ENCODE measurements at regions of chr10 and their contacts with region 1.

Region 1: GRCh38 chr10:119199231-119199992 is 8.0 kb upstream of the GRK5 start:
- DNase-seq: peak; percentile 58
- ATAC-seq: peak; percentile 79
- H3K4me3 Mint-ChIP-seq: no peak overlapping the region
- H3K27ac Mint-ChIP-seq: no peak overlapping the region
- H3K4me1 Mint-ChIP-seq: peaks cover 13% of the 10 kb centered on the region
- H3K27me3 Mint-ChIP-seq: no peaks in the 10 kb centered on the region
- CTCF ChIP-seq: peak; percentile 48

Region 2: GRCh38 chr10:119178372-119179119 is 20.9 kb before region 1 on chr10 and contains the start of gene PRDX3:
- CTCF ChIA-PET with region 1: interaction called, 13 read pairs
- POLR2A ChIA-PET with region 1: interaction called, 4 read pairs
- intact Hi-C with region 1: no loop called
- DNase-seq: peak; percentile 97
- ATAC-seq: peak; percentile 98
- H3K4me3 Mint-ChIP-seq: peak within 1 kb of the TSS; percentile 87
- H3K27ac Mint-ChIP-seq: peak within 1 kb of the TSS; percentile 92
- H3K4me1 Mint-ChIP-seq: peaks cover 29% of the 10 kb centered on the region
- H3K27me3 Mint-ChIP-seq: no peaks in the 10 kb centered on the region
- CTCF ChIP-seq: no peak
- total RNA-seq, gene PRDX3: 198 to 203 TPM

Region 3: DNA sequence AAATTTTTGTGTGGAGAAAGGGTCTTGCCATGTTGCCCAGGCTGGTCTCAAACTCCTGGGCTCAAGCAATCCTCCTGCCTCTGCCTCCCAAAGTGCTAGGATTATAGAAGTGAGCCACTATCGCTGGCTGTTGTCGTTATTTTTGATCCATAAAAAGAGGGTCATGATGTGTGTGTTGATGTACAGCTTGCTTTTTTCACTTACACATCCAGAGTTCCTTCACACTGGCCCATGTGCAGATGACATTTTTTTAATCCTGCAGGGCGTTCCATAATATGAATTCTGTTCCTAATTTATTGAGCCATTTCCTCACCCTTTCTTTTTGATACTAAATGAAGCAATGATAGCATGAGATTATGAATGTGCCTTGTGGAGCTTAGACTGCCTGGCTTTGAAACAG is 48.8 kb after region 1 on chr10:
- CTCF ChIA-PET with region 1: no interaction called
- POLR2A ChIA-PET with region 1: no interaction called
- intact Hi-C with region 1: no loop called
- DNase-seq: no peak
- ATAC-seq: no peak
- H3K4me3 Mint-ChIP-seq: no peak overlapping the region
- H3K27ac Mint-ChIP-seq: no peak overlapping the region
- H3K4me1 Mint-ChIP-seq: peaks cover 22% of the 10 kb centered on the region
- H3K27me3 Mint-ChIP-seq: no peaks in the 10 kb centered on the region
- CTCF ChIP-seq: no peak

Region 4: DNA sequence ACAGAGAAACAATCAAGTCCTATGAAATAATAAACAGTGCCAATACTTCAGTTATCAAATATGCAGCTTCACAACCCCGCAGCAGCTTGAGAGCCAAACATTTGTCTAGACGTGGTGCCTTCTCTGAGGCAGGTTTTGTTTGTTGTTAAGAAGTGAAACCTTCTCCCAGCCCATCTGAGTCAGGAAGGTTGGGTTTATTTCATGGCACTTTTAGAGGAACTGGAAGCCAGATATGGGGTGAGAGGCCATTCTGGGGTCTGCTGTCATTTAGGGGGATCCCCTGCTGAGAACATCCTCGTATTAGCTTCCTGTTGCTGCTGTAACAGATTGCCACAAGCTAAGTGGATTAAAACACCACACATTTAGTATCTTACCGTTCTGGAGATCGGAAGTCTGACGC is 121.6 kb after region 1 on chr10:
- CTCF ChIA-PET with region 1: interaction called, 10 read pairs
- POLR2A ChIA-PET with region 1: no interaction called
- intact Hi-C with region 1: no loop called
- DNase-seq: no peak
- ATAC-seq: peak; percentile 44
- H3K4me3 Mint-ChIP-seq: no peak overlapping the region
- H3K27ac Mint-ChIP-seq: no peak overlapping the region
- H3K4me1 Mint-ChIP-seq: peaks cover 25% of the 10 kb centered on the region
- H3K27me3 Mint-ChIP-seq: no peaks in the 10 kb centered on the region
- CTCF ChIP-seq: no peak

Region 5: GRCh38 chr10:119416855-119417254 is 217.4 kb after region 1 on chr10:
- CTCF ChIA-PET with region 1: interaction called, 39 read pairs
- POLR2A ChIA-PET with region 1: interaction called, 5 read pairs
- intact Hi-C with region 1: loop called (anchors 2 kb)
- DNase-seq: peak; percentile 85
- ATAC-seq: peak; percentile 89
- H3K4me3 Mint-ChIP-seq: no peak overlapping the region
- H3K27ac Mint-ChIP-seq: no peak overlapping the region
- H3K4me1 Mint-ChIP-seq: no peaks in the 10 kb centered on the region
- H3K27me3 Mint-ChIP-seq: no peaks in the 10 kb centered on the region
- CTCF ChIP-seq: peak; percentile 82

Region 6: DNA sequence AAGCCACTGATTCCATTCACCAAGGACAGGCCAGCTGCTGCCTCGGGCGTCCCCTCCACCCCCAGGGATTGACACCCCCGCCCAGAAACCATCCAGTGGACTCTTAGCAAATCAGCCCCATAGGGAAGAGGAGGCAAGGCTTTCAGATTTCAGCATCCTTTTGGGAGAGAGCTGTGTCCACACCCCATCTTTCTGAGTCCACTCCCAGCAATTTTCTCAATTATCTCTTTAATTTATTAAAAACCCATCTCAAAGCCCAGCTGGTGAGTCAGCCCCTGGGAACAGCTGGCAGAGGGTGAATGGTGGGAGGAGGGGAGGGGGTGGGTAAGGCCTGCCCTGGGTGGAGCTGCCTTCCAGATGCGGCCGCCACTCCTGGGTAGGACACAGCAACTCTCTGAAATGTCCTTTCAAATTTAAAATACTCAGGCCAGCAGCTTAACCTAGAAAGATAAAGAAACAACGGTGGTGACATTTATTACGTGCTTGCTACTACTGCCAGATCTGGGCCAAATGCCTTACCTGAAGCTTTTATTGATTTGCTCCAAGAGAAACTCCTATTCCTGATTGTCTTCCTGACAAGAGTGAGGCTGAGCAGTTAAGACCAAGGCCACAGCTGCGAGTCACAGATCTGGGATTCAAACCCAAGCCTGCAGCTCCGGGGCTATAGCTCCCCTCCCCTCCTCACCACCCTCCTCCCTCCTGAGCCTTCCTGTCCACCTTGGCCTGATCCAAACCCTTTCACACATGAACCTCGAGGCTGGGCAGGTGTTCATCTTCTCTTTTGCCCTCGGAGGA is 222.7 kb after region 1 on chr10:
- CTCF ChIA-PET with region 1: interaction called, 39 read pairs
- POLR2A ChIA-PET with region 1: interaction called, 3 read pairs
- intact Hi-C with region 1: loop called (anchors 2 kb)
- DNase-seq: no peak
- ATAC-seq: no peak
- H3K4me3 Mint-ChIP-seq: no peak overlapping the region
- H3K27ac Mint-ChIP-seq: no peak overlapping the region
- H3K4me1 Mint-ChIP-seq: no peaks in the 10 kb centered on the region
- H3K27me3 Mint-ChIP-seq: no peaks in the 10 kb centered on the region
- CTCF ChIP-seq: no peak

Measured in activated CD8-positive, alpha-beta T cell treated with anti-CD3 and anti-CD28 coated beads for 36 hours (primary cell).